ENCODE measurements at regions of chr17 and their contacts with region 1.

Region 1: GRCh38 chr17:48871551-48872351 is 20.8 kb upstream of the ATP5MC1 start:
- DNase-seq: peak; percentile 91
- H3K4me3 ChIP-seq: no peak overlapping the region
- H3K27ac ChIP-seq: peak overlapping the region; percentile 88
- H3K4me1 ChIP-seq: peaks cover 25% of the 10 kb centered on the region
- H3K27me3 ChIP-seq: no peaks in the 10 kb centered on the region
- CTCF ChIP-seq: no peak

Region 2: GRCh38 chr17:48767263-48767774 is 104.4 kb before region 1 on chr17:
- intact Hi-C with region 1: no loop called
- DNase-seq: no peak
- H3K4me3 ChIP-seq: no peak overlapping the region
- H3K27ac ChIP-seq: no peak overlapping the region
- H3K4me1 ChIP-seq: no peaks in the 10 kb centered on the region
- H3K27me3 ChIP-seq: no peaks in the 10 kb centered on the region
- CTCF ChIP-seq: no peak

Region 3: DNA sequence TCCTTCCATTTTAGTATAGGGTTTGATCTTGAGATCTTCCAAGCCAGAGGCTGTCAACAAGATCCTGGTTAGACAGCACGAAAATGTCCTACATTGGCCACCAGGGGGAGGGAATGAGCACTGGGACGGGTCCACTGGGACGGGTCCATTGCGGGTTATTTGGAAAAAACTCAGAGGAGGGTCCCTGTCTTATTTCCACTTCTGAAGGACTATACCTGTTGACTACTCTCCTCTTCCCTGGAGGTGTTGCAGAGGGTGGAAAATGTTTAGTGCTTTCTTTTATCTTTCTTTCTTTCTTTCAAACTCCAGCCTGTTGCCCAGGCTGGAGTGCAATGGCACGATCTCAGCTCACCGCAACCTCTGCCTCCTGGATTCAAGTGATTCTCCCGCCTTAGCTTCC is 57.2 kb before region 1 on chr17:
- intact Hi-C with region 1: loop called (anchors 5 kb)
- DNase-seq: peak; percentile 78
- H3K4me3 ChIP-seq: no peak overlapping the region
- H3K27ac ChIP-seq: no peak overlapping the region
- H3K4me1 ChIP-seq: peaks cover 4% of the 10 kb centered on the region
- H3K27me3 ChIP-seq: no peaks in the 10 kb centered on the region
- CTCF ChIP-seq: peak; percentile 76

Region 4: GRCh38 chr17:49101054-49101947 is 229.6 kb after region 1 on chr17:
- intact Hi-C with region 1: no loop called
- DNase-seq: no peak
- H3K4me3 ChIP-seq: no peak overlapping the region
- H3K27ac ChIP-seq: no peak overlapping the region
- H3K4me1 ChIP-seq: no peaks in the 10 kb centered on the region
- H3K27me3 ChIP-seq: no peaks in the 10 kb centered on the region
- CTCF ChIP-seq: no peak